ENCODE measurements at regions of chr4 and their contacts with region 1.

Region 1: DNA sequence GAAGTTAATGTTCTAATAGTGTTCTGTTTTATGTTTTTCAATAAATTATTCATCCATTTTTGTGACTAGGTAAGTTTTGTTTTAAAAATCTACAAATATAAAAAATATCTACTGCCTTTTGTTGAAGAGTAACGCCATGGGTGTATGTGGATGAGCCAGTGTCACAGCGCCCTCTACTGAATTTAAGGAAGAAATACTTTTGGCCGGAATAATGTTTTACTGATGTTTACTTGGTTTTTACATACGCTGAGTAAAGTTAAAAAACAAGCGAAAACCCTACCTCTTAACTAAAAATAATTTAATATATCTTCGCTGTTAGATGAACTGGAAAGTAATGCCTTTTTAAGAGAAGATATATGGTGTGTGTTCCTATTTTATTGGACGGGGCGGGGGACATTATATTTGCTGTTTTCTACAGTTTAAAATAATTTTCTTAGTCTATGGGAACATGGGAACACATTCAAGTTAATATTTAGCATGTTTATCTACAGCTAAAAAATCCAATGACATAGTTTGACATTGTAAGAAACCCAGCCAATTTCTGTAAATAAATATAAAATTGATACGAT is 86.1 kb downstream of the CPE start:
- DNase-seq: no peak
- H3K4me3 ChIP-seq: no peak overlapping the region
- H3K27ac ChIP-seq: no peak overlapping the region
- H3K4me1 ChIP-seq: no peaks in the 10 kb centered on the region
- H3K27me3 ChIP-seq: no peaks in the 10 kb centered on the region
- CTCF ChIP-seq: peak; percentile 84

Region 2: DNA sequence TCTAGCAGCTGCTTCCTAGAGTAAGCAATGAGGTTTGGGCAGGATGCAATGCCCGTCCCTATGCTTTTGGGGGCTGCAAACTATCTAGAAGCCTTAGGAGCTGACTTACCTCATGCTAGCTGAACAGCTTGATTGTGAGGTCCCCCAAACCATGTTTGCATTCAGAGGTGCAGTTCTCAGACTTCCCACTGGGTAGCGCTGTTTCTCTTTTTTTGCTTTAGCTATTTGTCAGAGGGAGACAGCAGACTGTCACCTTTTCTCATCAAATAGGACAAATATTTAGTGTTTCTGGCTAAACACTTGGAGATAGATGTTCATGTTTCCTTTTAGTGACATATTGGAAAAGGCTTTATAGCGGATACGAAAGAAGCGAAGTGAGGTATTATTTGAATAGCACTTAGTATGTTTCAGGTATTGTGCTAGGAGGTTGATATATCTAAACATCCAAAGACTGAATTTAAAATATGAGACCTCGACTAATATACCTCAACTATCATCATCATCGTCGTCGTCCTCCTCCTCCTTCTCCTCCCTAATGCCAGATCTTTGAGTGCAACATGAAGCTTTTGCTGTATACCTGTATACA is 333.6 kb before region 1 on chr4:
- intact Hi-C with region 1: loop called (anchors 2 kb)
- DNase-seq: no peak
- H3K4me3 ChIP-seq: no peak overlapping the region
- H3K27ac ChIP-seq: no peak overlapping the region
- H3K4me1 ChIP-seq: no peaks in the 10 kb centered on the region
- H3K27me3 ChIP-seq: peaks cover 26% of the 10 kb centered on the region
- CTCF ChIP-seq: peak; percentile 89

Region 3: DNA sequence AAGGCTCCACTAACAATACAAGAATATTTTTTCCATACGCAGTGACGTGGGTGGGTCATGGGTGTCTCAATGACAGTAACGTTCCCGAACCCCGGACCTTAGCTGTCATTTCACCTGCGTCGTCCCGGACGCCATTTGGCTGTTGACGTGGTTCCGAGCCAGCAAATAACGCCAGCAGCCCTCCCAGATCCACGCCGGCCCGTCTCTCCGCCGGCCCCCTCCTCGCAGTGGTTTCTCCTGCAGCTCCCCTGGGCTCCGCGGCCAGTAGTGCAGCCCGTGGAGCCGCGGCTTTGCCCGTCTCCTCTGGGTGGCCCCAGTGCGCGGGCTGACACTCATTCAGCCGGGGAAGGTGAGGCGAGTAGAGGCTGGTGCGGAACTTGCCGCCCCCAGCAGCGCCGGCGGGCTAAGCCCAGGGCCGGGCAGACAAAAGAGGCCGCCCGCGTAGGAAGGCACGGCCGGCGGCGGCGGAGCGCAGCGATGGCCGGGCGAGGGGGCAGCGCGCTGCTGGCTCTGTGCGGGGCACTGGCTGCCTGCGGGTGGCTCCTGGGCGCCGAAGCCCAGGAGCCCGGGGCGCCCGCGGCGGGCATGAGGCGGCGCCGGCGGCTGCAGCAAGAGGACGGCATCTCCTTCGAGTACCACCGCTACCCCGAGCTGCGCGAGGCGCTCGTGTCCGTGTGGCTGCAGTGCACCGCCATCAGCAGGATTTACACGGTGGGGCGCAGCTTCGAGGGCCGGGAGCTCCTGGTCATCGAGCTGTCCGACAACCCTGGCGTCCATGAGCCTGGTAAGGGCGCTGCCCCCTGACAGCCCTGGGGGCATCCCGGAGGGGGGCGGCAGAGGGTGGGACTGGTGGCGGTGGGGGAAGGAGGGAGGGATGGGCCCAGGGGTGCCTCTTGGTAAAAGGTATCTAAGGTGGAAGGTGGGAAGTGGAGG is 85.9 kb before region 1 on chr4 and contains the start of gene CPE:
- intact Hi-C with region 1: loop called (anchors 10 kb)
- DNase-seq: peak; percentile 76
- H3K4me3 ChIP-seq: peak within 1 kb of the TSS; percentile 74
- H3K27ac ChIP-seq: peak within 1 kb of the TSS; percentile 83
- H3K4me1 ChIP-seq: peaks cover 22% of the 10 kb centered on the region
- H3K27me3 ChIP-seq: peaks cover 39% of the 10 kb centered on the region
- CTCF ChIP-seq: peak; percentile 66
- total RNA-seq, gene CPE: 43.2 TPM